ENCODE measurements at regions of chr9 and their contacts with region 1.

Region 1: GRCh38 chr9:127388037-127388855 is 8.7 kb upstream of the SLC2A8 start:
- DNase-seq: peak; percentile 67 to 95 (median 84)
- ATAC-seq: peak; percentile 97 to 99 (median 98)
- H3K4me3 ChIP-seq: no peak overlapping the region
- H3K4me3 Mint-ChIP-seq: peak overlapping the region; percentile 22 to 39 (median 36)
- H3K27ac ChIP-seq: no peak overlapping the region
- H3K27ac Mint-ChIP-seq: peak overlapping the region; percentile 49 to 58
- H3K4me1 ChIP-seq: peaks cover 14 to 40% of the 10 kb centered on the region in 2 experiments
- H3K4me1 Mint-ChIP-seq: peaks cover 28 to 46% (median 30%) of the 10 kb centered on the region in 3 donors
- H3K27me3 ChIP-seq: peaks cover 7 to 78% of the 10 kb centered on the region in 2 experiments
- H3K27me3 Mint-ChIP-seq: peaks cover 61 to 80% of the 10 kb centered on the region in 2 donors

Region 2: GRCh38 chr9:127489471-127490115 is 101.3 kb after region 1 on chr9:
- CTCF ChIA-PET with region 1: no interaction called
- POLR2A ChIA-PET with region 1: no interaction called
- DNase-seq: no peak
- ATAC-seq: no peak
- H3K4me3 ChIP-seq: no peak overlapping the region
- H3K4me3 Mint-ChIP-seq: no peak overlapping the region
- H3K27ac ChIP-seq: no peak overlapping the region
- H3K27ac Mint-ChIP-seq: no peak overlapping the region
- H3K4me1 ChIP-seq: no peaks in the 10 kb centered on the region
- H3K4me1 Mint-ChIP-seq: no peaks in the 10 kb centered on the region
- H3K27me3 ChIP-seq: no peaks in the 10 kb centered on the region
- H3K27me3 Mint-ChIP-seq: no peaks in the 10 kb centered on the region

Region 3: GRCh38 chr9:127611359-127611898 is 223.2 kb after region 1 on chr9:
- CTCF ChIA-PET with region 1: no interaction called
- POLR2A ChIA-PET with region 1: interaction called in 1 of 2 experiments, 10 read pairs
- DNase-seq: peak in 5 of 35 experiments; percentile 4 to 16 (median 9)
- ATAC-seq: peak; percentile 2 to 15 (median 7)
- H3K4me3 ChIP-seq: peak overlapping the region; percentile 34 to 61
- H3K4me3 Mint-ChIP-seq: peak overlapping the region; percentile 90 to 94 (median 91)
- H3K27ac ChIP-seq: no peak overlapping the region
- H3K27ac Mint-ChIP-seq: peak overlapping the region; percentile 24 to 77
- H3K4me1 ChIP-seq: peaks cover 5 to 33% of the 10 kb centered on the region in 2 experiments
- H3K4me1 Mint-ChIP-seq: peaks cover 30 to 42% (median 34%) of the 10 kb centered on the region in 3 donors
- H3K27me3 ChIP-seq: peaks cover 7 to 42% of the 10 kb centered on the region in 2 experiments
- H3K27me3 Mint-ChIP-seq: peaks cover 3 to 19% of the 10 kb centered on the region in 2 donors